ENCODE measurements at regions of chr3 and their contacts with region 1.

Region 1: DNA sequence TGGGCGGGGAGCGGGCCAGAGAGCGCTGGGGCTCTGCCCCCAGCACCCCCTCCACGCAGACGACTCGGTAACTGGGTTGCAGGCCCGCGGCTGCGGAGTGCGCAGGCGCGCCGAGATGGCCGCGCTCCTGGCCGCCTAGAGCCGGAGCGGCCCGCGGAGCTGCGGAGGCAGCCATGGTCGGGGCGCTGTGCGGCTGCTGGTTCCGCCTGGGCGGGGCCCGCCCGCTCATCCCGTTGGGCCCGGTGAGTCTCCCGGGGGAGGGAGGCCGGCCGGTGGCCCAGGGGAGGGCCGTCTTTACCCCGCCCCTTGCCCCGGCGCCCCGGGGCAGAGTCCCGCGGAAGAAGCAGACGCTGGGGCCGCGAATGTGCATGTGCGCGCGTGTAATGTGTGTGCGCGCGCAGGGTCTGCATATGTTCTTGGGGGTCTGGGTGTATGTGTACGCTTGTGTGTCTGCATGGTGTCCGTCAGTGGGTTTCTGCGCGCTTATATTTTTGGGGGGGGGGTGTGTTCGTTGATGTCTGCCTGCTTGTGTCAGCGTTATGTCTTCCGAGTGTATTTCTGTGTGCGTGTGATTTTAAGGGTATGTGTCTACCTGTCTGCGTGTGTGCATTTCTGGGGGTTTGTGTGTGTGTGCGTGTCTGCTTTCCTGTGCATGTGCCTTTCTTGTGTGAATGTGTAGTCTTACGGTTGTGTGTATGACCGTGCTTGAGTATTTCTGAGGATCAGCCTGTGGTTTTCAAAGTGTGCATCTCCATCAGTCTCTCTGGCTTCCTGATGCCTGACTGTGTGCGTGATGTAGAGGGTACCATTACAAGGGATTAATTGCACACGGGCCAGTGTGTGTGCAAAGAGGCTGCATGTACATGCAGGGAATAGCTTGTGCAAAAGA is at the start of gene ABHD14A:
- H3K4me3 ChIP-seq: peak within 1 kb of the TSS; percentile 44
- H3K27ac ChIP-seq: no peak within 1 kb of the TSS; the same call in 1 of the 2 replicates
- H3K4me1 ChIP-seq: no peaks in the 10 kb centered on the region
- CTCF ChIP-seq: no peak

Region 2: DNA sequence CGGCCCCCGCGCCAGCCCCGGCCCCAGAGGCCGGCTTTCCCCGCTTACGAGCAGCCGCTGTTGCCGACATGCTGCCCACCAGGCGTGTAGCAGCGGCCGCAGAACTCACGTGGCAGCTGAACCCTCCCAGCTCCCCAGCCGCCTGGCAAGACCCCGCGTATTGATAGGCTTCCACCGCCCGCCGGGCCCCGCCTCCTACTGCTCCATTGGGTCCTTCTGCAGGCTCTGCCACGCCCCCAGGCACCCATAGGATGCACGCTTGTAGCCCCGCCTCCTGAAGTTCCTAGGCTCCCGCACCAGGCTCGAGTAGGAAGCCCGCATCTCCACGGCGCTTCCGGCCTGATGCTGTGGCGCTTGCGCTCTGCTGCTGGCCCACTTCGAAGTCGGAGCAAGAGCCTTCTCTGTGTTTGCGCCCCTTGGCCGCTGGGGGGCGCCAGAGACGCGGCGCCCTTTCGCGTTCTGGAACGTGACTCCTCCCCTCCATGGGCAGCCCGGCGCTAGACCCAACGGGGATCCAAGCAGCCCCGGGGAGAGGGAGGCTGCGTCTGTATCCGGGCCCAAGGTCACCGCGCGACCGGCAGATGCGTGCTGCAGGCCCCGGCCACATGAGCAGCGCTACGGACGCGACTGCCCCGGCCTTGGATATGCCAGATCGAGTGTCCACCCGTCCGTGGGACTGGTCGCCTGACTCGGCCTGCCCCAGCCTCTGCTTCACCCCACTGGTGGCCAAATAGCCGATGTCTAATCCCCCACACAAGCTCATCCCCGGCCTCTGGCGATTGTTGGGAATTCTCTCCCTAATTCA is 33.2 kb before region 1 on chr3 and contains the starts of genes PARP3 and RRP9:
- CTCF ChIA-PET with region 1: interaction called, 22 read pairs
- POLR2A ChIA-PET with region 1: interaction called, 6 read pairs
- H3K4me3 ChIP-seq: peak within 1 kb of the TSS; percentile 70
- H3K27ac ChIP-seq: peak within 1 kb of the TSS; percentile 81
- H3K4me1 ChIP-seq: peaks cover 4% of the 10 kb centered on the region
- CTCF ChIP-seq: peak; percentile 98

Region 3: DNA sequence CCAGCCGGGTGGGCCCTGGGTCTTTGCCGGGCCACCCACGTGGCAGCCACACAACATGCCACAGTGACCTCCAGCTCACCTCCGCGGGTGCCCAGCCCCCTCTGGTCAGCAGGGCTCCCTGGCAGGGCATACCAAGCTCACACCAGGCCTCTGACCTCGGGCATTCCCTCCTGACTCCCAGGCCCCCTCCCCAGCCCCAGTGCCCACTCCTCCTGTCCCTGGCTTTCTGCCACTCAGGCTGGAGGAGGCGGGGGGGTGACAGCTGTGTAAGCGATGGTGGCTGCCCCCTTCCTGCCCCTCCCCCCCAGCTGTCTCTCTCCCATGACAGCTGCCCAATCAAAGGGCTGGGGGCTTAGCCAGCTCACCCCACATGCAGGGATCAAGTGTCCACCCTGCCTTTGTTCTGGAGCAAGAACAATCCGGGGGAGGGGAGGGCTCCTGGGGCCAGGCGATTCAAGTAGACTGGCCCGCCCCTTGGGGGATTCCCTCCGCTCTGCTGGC is 11.2 kb before region 1 on chr3:
- CTCF ChIA-PET with region 1: interaction called, 12 read pairs
- POLR2A ChIA-PET with region 1: no interaction called
- H3K4me3 ChIP-seq: no peak overlapping the region
- H3K27ac ChIP-seq: no peak overlapping the region
- H3K4me1 ChIP-seq: 0 out of 2 replicates have a peak, but pooled peaks cover 2% of the 10 kb centered on the region
- CTCF ChIP-seq: no peak

Region 4: DNA sequence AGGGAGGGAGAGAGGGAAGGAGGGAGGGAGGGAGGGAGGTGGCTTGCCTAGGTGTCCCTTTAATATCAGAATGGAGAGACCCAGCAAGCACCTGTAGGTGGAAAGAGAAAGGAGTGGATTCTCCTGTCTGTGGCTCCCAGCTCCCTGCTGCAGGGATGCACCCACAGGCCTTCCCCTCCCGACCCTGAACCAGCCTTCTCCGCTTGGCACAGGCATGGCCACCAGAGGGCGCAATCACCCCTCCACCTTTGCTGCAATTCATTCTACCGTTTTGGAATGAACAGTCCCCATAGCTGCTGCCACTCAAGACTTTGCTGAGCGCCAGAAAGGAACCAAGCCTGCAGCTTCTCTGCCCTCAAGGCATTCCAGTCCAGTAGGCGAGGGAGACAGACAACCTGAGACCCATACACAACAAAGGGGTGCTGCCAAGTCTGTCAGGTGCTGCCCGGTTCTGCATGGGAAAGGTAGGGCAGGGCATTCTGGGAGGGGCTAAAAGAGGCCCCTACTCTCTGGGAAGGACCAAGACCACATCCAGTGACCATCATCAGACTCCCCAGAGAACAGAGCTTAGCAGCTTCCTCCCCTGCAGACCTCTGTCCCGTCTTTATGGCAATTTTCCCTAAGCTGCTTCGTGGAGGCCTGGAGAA is 245.3 kb after region 1 on chr3:
- CTCF ChIA-PET with region 1: no interaction called
- POLR2A ChIA-PET with region 1: no interaction called
- H3K4me3 ChIP-seq: no peak overlapping the region
- H3K27ac ChIP-seq: no peak overlapping the region
- H3K4me1 ChIP-seq: no peaks in the 10 kb centered on the region
- CTCF ChIP-seq: peak; percentile 58